Activated naive CD4-positive, alpha-beta T cell treated with anti-CD3 and anti-CD28 coated beads for 36 hours (primary cell): ENCODE measurements at regions of chr3 and their contacts with region 1.

Region 1: DNA sequence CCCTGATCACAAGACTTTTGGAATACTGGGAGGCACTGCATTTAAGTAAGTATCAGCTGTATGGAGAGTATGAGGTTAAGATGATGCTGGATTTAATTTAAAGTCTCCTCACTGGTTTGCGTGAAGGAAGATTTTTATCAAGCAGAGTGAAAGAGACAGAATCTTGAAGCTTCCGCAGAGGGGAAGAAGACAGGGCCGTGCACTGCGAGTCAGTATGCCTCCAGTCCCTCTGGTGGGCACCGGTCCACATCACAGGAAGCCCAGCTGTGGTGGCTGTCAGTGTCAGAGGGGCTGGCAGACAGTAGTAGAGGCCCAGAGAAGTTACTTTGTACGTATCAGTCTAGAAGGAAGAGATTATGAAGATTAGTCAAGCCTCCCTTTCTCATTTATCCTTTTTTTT is 379.0 kb upstream of the TPRG1 start:
- DNase-seq: no peak
- H3K4me3 Mint-ChIP-seq: no peak overlapping the region
- H3K27ac Mint-ChIP-seq: no peak overlapping the region
- H3K4me1 Mint-ChIP-seq: peaks cover 3% of the 10 kb centered on the region
- H3K27me3 Mint-ChIP-seq: no peaks in the 10 kb centered on the region

Region 2: GRCh38 chr3:187738331-187739093 is 1054.3 kb before region 1 on chr3:
- CTCF ChIA-PET with region 1: interaction called, 10 read pairs
- intact Hi-C with region 1: loop called (anchors 1 kb)
- DNase-seq: peak; percentile 85
- H3K4me3 Mint-ChIP-seq: peak overlapping the region; percentile 86
- H3K27ac Mint-ChIP-seq: peak overlapping the region; percentile 97
- H3K4me1 Mint-ChIP-seq: peaks cover 35% of the 10 kb centered on the region
- H3K27me3 Mint-ChIP-seq: no peaks in the 10 kb centered on the region

Region 3: DNA sequence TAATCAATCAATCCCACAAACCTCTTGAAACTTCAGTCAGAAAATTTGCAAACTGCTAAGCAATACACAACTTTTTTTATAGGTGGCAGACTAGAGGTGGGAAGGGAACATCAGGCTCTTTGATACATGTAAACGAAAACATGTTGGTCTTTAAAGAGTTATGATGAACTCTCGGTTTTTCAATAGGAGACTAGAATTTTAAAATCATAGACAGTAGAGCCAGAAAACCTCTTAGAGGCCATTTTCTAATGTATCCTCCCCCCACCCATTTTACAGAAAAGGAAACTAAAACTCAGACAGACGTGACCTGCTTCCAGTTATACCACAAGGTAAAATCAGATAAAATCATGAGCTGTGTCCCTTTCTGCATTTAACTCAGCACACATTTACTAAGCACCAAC is 817.9 kb before region 1 on chr3:
- CTCF ChIA-PET with region 1: no interaction called
- intact Hi-C with region 1: loop called (anchors 2 kb)
- DNase-seq: no peak
- H3K4me3 Mint-ChIP-seq: peak overlapping the region; percentile 50
- H3K27ac Mint-ChIP-seq: peak overlapping the region; percentile 82
- H3K4me1 Mint-ChIP-seq: peaks cover 50% of the 10 kb centered on the region
- H3K27me3 Mint-ChIP-seq: no peaks in the 10 kb centered on the region

Region 4: DNA sequence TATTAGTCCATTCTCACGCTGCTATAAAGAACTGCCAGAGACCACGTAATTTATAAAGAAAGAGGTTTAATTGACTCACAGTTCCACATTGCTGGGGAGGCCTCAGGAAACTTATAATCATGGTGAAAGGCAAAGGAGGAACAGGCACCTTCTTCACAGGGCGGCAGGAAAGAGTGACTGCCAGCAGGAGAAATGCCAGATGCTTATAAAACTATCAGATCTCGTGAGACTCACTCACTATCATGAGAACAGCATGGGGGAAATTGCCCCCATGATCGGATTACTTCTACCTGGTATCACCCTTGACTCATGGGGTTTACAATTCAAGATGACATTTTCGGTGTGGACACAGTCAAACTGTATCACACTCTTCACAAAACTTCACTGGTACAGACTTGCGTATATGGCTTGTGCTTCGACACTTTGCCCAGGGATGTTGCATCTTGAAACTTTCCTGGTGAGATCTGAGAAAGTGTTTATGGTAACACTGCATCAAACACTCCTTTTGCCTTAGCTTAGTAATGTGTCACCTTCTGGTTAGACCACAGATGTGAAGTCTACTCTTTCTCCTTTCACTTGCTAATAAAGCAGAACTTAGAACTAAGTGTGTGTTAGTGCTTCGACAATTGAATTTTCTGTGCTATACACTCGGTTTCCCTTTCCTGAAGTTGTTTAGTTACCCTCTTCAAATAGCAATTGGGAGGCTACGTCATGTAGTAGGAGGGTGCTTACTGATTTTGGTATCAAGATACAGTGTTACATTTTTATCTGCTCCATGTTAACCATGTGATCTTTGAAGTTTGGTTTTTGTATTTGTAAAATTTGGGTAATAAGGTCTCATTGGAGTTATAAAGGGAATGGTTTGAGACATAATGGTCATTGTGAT is 453.1 kb before region 1 on chr3:
- CTCF ChIA-PET with region 1: interaction called, 3 read pairs
- intact Hi-C with region 1: loop called (anchors 1 kb)
- DNase-seq: peak; percentile 76
- H3K4me3 Mint-ChIP-seq: peak overlapping the region; percentile 59
- H3K27ac Mint-ChIP-seq: peak overlapping the region; percentile 92
- H3K4me1 Mint-ChIP-seq: peaks cover 34% of the 10 kb centered on the region
- H3K27me3 Mint-ChIP-seq: no peaks in the 10 kb centered on the region

Region 5: GRCh38 chr3:188584162-188584529 is 208.6 kb before region 1 on chr3:
- CTCF ChIA-PET with region 1: no interaction called
- intact Hi-C with region 1: loop called (anchors 1 kb)
- DNase-seq: peak; percentile 61
- H3K4me3 Mint-ChIP-seq: no peak overlapping the region
- H3K27ac Mint-ChIP-seq: no peak overlapping the region
- H3K4me1 Mint-ChIP-seq: peaks cover 15% of the 10 kb centered on the region
- H3K27me3 Mint-ChIP-seq: no peaks in the 10 kb centered on the region

Region 6: DNA sequence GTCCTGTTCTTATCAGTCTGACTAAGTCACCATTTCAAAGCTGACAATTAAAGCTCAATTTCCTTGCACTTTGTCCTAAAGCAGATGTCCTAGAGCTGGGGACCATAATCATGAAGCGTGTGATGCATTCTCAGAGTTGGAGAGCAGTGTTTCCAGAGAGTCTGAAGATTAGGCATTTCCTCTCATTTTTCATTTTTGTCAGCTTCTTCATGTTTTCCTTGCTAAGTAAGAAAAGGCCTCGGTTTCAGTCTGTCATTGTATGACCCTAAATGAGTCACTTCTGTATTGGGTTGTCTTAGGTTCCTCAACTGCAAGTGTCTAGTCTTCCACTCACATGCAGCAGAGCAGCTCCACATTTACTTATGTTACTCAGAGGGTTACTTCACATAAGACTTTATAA is 121.8 kb after region 1 on chr3:
- CTCF ChIA-PET with region 1: no interaction called
- intact Hi-C with region 1: loop called (anchors 1 kb)
- DNase-seq: peak; percentile 36
- H3K4me3 Mint-ChIP-seq: no peak overlapping the region
- H3K27ac Mint-ChIP-seq: peak overlapping the region; percentile 85
- H3K4me1 Mint-ChIP-seq: peaks cover 47% of the 10 kb centered on the region
- H3K27me3 Mint-ChIP-seq: peaks cover 2% of the 10 kb centered on the region

Region 7: DNA sequence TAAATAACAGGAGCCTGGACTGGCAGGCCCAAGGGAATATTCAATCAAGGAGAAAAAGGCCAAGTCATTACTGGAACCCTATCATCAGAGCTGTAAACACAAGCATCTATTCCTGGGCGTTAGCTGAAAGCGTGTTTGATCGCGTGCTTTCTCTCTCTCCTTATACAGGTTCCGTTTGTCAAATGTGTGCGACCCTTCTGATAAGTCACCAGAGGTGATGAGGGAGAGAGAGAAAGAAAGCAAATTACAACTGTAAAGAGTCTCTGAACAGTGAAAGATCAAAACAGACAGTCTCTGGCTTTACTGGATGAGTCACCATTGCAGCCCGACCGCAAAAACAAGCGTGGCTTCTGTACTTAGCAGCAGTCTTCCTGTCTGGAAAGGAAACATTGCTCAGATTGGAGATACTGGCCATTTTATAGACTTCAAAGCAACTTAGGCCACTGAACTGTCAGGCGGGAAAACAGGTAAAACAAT is 339.5 kb after region 1 on chr3:
- CTCF ChIA-PET with region 1: no interaction called
- intact Hi-C with region 1: loop called (anchors 1 kb)
- DNase-seq: peak; percentile 91
- H3K4me3 Mint-ChIP-seq: peak overlapping the region; percentile 41
- H3K27ac Mint-ChIP-seq: peak overlapping the region; percentile 76
- H3K4me1 Mint-ChIP-seq: peaks cover 21% of the 10 kb centered on the region
- H3K27me3 Mint-ChIP-seq: no peaks in the 10 kb centered on the region